Gastrocnemius medialis (tissue), 4 donors: ENCODE measurements at regions of chr20 and their contacts with region 1.

Region 1: DNA sequence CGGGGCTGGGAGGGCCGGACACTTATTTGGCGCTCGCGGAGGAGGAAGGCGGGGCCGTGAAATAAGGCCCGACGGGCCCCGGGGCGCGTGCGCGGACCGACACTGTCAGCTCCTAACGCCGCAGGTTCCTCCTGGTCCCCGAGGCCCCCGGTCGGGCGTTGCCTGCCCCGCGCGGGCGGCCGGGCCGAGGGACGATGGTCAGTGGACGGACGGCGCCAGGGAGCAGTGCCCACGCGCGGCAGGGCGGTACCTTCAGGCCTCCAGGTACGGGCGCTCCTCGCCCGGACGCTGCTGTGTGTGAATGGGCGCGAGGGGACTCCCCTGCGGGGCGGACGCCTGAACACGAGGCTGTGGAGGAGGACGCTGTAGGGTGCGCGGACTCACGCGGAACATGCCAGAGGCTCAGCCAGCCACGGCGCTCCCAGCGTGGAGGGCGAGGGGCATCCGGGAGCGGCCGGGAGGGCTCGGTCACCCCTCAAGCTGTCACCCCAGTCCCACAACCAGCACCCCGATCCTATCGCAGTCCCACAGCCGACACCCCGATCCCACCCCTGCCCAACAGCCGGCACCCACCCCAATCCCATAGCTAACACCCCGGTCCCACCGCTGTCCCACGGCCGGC is 339 bp upstream of the GMEB2 start:
- DNase-seq: peak; percentile 90 to 94
- ATAC-seq: peak; percentile 91 to 92
- H3K4me3 ChIP-seq: peak overlapping the region; percentile 67 to 99 (median 84)
- H3K27ac ChIP-seq: peak overlapping the region; percentile 90 to 99 (median 96)
- H3K4me1 ChIP-seq: peaks cover 16 to 23% of the 10 kb centered on the region in 2 donors
- H3K27me3 ChIP-seq: no peaks in the 10 kb centered on the region
- CTCF ChIP-seq: no peak
- POLR2A ChIP-seq: peak; percentile 79

Region 2: GRCh38 chr20:63416631-63417030 is 210.6 kb before region 1 on chr20:
- in situ Hi-C with region 1: no loop called
- intact Hi-C with region 1: no loop called
- DNase-seq: no peak
- ATAC-seq: no peak
- H3K4me3 ChIP-seq: no peak overlapping the region
- H3K27ac ChIP-seq: no peak overlapping the region
- H3K4me1 ChIP-seq: no peaks in the 10 kb centered on the region
- H3K27me3 ChIP-seq: peaks cover 38 to 78% (median 52%) of the 10 kb centered on the region in 3 donors
- CTCF ChIP-seq: no peak
- POLR2A ChIP-seq: no peak

Region 3: DNA sequence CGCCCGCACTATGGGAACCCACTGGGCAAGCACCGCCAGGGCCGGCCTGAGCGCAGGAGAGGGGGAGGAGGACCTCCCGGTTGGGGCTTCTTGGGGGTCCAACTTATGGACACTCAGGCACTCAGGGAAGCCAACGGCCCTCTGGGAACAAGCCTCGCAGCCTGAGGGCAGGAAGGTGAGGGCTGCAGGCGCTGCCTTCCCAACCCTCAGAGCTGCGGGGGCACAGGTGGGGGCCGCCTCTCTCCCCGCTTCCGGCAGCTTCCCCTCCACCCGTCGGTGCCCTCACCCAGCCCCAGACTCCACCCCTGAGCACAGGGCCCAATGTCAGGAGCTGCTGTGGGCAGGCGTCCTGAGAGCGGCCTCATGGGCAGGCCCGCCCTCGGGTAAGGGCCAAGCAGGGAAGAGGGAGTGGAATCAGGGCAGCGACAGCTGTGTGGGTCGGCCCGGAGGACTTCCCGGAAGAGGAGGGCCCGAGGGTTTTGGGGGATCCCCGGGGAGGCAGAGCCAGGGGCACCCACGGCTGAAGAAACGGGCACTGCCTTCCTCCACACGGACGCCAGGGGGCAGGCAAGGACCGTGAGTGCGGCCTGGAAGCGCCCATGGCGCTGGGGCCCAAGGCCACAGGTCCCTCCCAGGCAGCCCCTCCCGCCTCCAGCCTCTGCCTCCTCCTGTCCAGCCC is 89.6 kb before region 1 on chr20:
- in situ Hi-C with region 1: loop called in 1 of 4 experiments (anchors 25 kb)
- intact Hi-C with region 1: no loop called
- DNase-seq: peak; percentile 54 to 68
- ATAC-seq: peak; percentile 81 to 88
- H3K4me3 ChIP-seq: peak overlapping the region in 3 of 4 donors; percentile 9 to 40 (median 17)
- H3K27ac ChIP-seq: peak overlapping the region in 1 of 4 donors; percentile 23
- H3K4me1 ChIP-seq: peaks cover 0 to 4% of the 10 kb centered on the region in 2 donors
- H3K27me3 ChIP-seq: peaks cover 28 to 38% (median 33%) of the 10 kb centered on the region in 3 donors
- CTCF ChIP-seq: peak; percentile 88 to 98 (median 96)
- POLR2A ChIP-seq: peak in 1 of 2 donors; percentile 6

Region 4: GRCh38 chr20:63657937-63658748 is 30.9 kb after region 1 on chr20 and contains the start of gene RTEL1:
- in situ Hi-C with region 1: no loop called
- intact Hi-C with region 1: loop called (anchors 1 kb)
- DNase-seq: peak; percentile 82 to 88
- ATAC-seq: peak; percentile 96 to 97
- H3K4me3 ChIP-seq: peak within 1 kb of the TSS; percentile 78 to 94 (median 89)
- H3K27ac ChIP-seq: peak within 1 kb of the TSS; percentile 91 to 96 (median 92)
- H3K4me1 ChIP-seq: peaks cover 19 to 28% of the 10 kb centered on the region in 2 donors
- H3K27me3 ChIP-seq: peaks cover 0 to 3% (median 0%) of the 10 kb centered on the region in 3 donors
- CTCF ChIP-seq: peak in 2 of 5 experiments; percentile 10 to 24
- POLR2A ChIP-seq: peak; percentile 18 to 34
- total RNA-seq, gene RTEL1: 2.4 to 9.1 (median 6.0) TPM

Region 5: DNA sequence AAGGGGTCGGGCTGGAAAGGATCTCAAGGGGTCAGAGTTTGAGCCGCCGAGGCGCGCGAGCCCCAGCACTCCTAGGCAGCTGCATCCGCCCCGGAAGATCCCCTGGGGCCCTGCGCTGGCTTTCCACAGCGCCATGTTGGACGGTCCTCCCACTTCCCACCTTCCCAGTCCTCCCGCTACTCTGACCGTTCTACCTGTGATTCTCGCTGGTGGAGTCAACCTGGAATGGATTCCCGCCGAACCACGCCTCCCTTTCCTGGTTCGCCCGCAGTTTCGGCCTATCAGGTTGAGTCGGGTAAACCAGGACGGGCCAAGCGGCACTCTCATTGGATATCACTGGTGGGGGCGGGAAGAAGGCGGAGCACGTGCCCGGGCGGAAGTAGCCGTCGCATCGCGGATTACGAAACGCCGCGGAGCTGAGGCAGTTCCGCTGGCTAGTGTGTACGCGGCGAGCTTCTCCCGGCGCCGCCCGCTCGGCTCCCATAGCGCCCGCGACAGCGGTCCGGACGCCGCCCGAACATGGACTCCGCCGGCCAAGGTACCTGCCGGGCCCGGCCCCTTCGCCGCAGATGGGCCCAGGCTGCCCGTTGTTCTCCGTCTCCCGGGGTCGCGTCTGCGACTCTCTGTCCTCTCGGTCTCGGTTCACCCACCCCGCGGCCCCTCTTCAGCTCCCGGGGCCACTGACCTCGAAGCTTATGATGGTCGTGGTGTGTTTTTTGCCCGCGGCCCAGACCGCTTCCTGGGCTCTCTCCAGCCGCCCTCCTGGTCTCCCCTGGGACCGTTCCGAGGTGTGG is 237.8 kb after region 1 on chr20 and contains the start of gene TPD52L2:
- in situ Hi-C with region 1: no loop called
- intact Hi-C with region 1: loop called (anchors 10 kb)
- DNase-seq: peak; percentile 99
- ATAC-seq: peak; percentile 94 to 99
- H3K4me3 ChIP-seq: peak within 1 kb of the TSS; percentile 86 to 99 (median 90)
- H3K27ac ChIP-seq: peak within 1 kb of the TSS; percentile 97 to 99 (median 98)
- H3K4me1 ChIP-seq: peaks cover 25 to 27% of the 10 kb centered on the region in 2 donors
- H3K27me3 ChIP-seq: no peaks in the 10 kb centered on the region
- CTCF ChIP-seq: no peak
- POLR2A ChIP-seq: peak; percentile 98 to 99
- total RNA-seq, gene TPD52L2: 57.7 to 92.4 (median 59.8) TPM

Region 6: GRCh38 chr20:64062596-64063388 is 435.6 kb after region 1 on chr20 and contains the start of gene TCEA2:
- in situ Hi-C with region 1: no loop called
- intact Hi-C with region 1: loop called (anchors 10 kb)
- DNase-seq: peak; percentile 93 to 94
- ATAC-seq: peak; percentile 94
- H3K4me3 ChIP-seq: peak within 1 kb of the TSS; percentile 72 to 99 (median 76)
- H3K27ac ChIP-seq: peak within 1 kb of the TSS; percentile 70 to 91 (median 79)
- H3K4me1 ChIP-seq: peaks cover 10 to 24% of the 10 kb centered on the region in 2 donors
- H3K27me3 ChIP-seq: no peaks in the 10 kb centered on the region
- CTCF ChIP-seq: no peak
- POLR2A ChIP-seq: peak; percentile 63
- total RNA-seq, gene TCEA2: 8.4 to 21.0 (median 8.8) TPM